CD14-positive monocyte (primary cell): ENCODE measurements at regions of chr9 and their contacts with region 1.

Region 1: GRCh38 chr9:88578121-88579054 is 43.4 kb downstream of the NXNL2 start:
- DNase-seq: peak; percentile 58 to 76 (median 70)
- H3K4me3 ChIP-seq: peak overlapping the region in 1 of 3 experiments; percentile 62
- H3K4me3 Mint-ChIP-seq: peak overlapping the region; percentile 65 to 84
- H3K27ac ChIP-seq: no peak overlapping the region
- H3K27ac Mint-ChIP-seq: peak overlapping the region in 2 of 7 donors; percentile 26 to 70
- H3K4me1 ChIP-seq: peaks cover 4 to 8% of the 10 kb centered on the region in 2 donors
- H3K4me1 Mint-ChIP-seq: peaks cover 15% of the 10 kb centered on the region
- H3K27me3 ChIP-seq: no peaks in the 10 kb centered on the region
- H3K27me3 Mint-ChIP-seq: peaks cover 0 to 13% (median 4%) of the 10 kb centered on the region in 3 donors
- CTCF ChIP-seq: peak; percentile 95

Region 2: DNA sequence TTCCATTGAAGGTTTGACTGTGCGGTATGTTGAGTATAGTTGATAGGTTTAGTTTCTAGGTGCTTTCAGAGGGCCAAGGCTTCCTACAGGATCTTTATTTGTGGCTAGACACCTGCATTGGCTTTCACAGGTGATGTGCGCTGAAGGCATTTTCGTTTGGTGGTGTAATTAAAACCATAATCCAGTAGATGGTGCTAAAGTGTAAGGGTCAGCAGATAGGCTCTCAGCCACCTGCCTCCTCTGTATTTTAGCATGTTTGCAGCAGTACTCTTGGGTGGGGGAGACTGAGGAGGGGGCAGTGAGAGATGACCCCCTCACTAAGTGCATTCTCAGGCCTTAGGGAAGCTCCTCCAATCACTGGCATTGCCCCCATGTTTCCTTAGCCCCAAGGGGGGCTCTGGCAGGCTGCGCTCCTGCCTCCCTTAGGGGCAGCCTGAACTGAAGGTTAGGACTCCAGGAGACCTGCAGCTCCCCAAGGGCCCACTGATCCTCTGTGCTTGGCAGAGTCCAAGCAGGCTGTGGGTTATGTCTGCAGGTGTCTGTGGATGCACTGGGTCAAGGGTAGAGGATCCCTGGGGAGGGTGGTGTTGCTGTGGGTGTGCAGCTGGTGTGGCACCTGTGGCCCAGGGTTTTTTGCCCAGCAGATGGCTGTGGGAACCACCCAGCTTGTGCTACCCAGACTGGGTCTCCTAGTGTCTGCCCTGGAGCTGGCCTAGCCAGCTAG is 627.5 kb before region 1 on chr9:
- intact Hi-C with region 1: loop called (anchors 2 kb)
- DNase-seq: peak in 2 of 3 donors; percentile 35 to 47
- H3K4me3 ChIP-seq: no peak overlapping the region
- H3K4me3 Mint-ChIP-seq: no peak overlapping the region
- H3K27ac ChIP-seq: no peak overlapping the region
- H3K27ac Mint-ChIP-seq: no peak overlapping the region
- H3K4me1 ChIP-seq: no peaks in the 10 kb centered on the region
- H3K4me1 Mint-ChIP-seq: no peaks in the 10 kb centered on the region
- H3K27me3 ChIP-seq: peaks cover 0 to 19% of the 10 kb centered on the region in 2 donors
- H3K27me3 Mint-ChIP-seq: peaks cover 12 to 27% (median 24%) of the 10 kb centered on the region in 3 donors
- CTCF ChIP-seq: peak; percentile 78